ENCODE measurements at regions of chr5 and their contacts with region 1.

Region 1: GRCh38 chr5:148791334-148791667 is 35.1 kb upstream of the ADRB2 start:
- DNase-seq: no peak
- H3K4me3 Mint-ChIP-seq: no peak overlapping the region
- H3K27ac Mint-ChIP-seq: peak overlapping the region; percentile 56
- H3K4me1 Mint-ChIP-seq: peaks cover 31% of the 10 kb centered on the region
- H3K27me3 Mint-ChIP-seq: peaks cover 17% of the 10 kb centered on the region

Region 2: DNA sequence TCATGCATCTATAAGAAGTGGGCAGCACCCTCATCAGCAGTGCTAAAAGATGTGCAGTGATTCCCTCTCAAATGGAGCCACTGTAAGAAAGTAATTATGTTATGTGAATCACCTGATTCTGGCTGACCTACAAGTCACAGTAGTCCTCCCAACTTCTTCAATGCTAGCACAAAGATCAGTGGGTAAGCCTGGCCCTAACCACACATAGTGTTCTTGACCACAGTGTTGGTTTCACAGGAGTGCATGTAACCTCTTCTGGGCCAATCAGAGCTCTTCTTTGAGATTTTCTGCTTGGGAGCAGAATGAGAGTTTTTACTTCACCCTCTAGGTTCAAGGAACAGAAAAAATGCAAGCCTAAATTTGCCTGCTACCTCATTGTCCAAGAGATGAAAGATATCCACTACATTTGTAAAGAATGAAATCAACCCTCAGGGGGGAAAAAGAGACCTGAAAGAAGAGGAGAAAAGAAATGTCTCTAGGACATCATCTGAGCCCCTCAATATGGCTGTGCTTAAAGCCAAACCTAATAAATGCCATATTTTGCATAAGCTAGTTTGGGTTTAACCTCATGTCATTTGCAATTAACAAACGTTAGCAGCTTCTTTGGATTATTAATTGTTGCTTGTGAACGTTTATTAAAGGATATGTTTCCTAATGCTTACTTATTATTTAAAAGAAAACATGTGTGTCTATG is 30.2 kb before region 1 on chr5:
- intact Hi-C with region 1: no loop called
- DNase-seq: no peak
- H3K4me3 Mint-ChIP-seq: no peak overlapping the region
- H3K27ac Mint-ChIP-seq: no peak overlapping the region
- H3K4me1 Mint-ChIP-seq: no peaks in the 10 kb centered on the region
- H3K27me3 Mint-ChIP-seq: peaks cover 23% of the 10 kb centered on the region

Region 3: GRCh38 chr5:148826053-148826738 is 34.9 kb after region 1 on chr5 and contains the start of gene ADRB2:
- intact Hi-C with region 1: loop called (anchors 1 kb)
- DNase-seq: peak; percentile 86
- H3K4me3 Mint-ChIP-seq: peak within 1 kb of the TSS; percentile 89
- H3K27ac Mint-ChIP-seq: peak within 1 kb of the TSS; percentile 75
- H3K4me1 Mint-ChIP-seq: peaks cover 34% of the 10 kb centered on the region
- H3K27me3 Mint-ChIP-seq: peaks cover 63% of the 10 kb centered on the region
- total RNA-seq, gene ADRB2: 0.83 and 0.93 TPM in 2 replicates

Measured in activated T-helper 1 cell treated with anti-CD3 and anti-CD28 coated beads, Interleukin-12 subunit alpha, Interleukin-12 subunit beta, Interleukin-2, Interleukin-4 antibody, amounts not matched to agents 30 ng/mL and 10 ng/mL and 1 ng/mL, durations not matched to agents 14 hours and 24 hours and 36 hours (primary cell).